ENCODE measurements at regions of chr5 and their contacts with region 1.

Region 1: GRCh38 chr5:140235791-140236551 is 61.0 kb downstream of the CYSTM1 start:
- DNase-seq: no peak
- ATAC-seq: no peak
- H3K4me3 ChIP-seq: no peak overlapping the region
- H3K27ac ChIP-seq: no peak overlapping the region
- H3K4me1 ChIP-seq: peaks cover 6% of the 10 kb centered on the region
- H3K27me3 ChIP-seq: no peaks in the 10 kb centered on the region
- CTCF ChIP-seq: no peak
- POLR2A ChIP-seq: no peak
- RAD21 ChIP-seq: no peak

Region 2: GRCh38 chr5:139415221-139415861 is 820.6 kb before region 1 on chr5:
- CTCF ChIA-PET with region 1: no interaction called
- POLR2A ChIA-PET with region 1: no interaction called
- dilution Hi-C with region 1: no loop called
- in situ Hi-C with region 1: no loop called
- intact Hi-C with region 1: no loop called
- DNase-seq: no peak
- ATAC-seq: no peak
- H3K4me3 ChIP-seq: no peak overlapping the region
- H3K27ac ChIP-seq: no peak overlapping the region
- H3K4me1 ChIP-seq: peaks cover 7% of the 10 kb centered on the region; the same call in 1 of the 2 replicates
- H3K27me3 ChIP-seq: no peaks in the 10 kb centered on the region
- CTCF ChIP-seq: no peak
- POLR2A ChIP-seq: no peak
- RAD21 ChIP-seq: no peak

Region 3: GRCh38 chr5:140202078-140202477 is 33.9 kb before region 1 on chr5:
- CTCF ChIA-PET with region 1: no interaction called
- POLR2A ChIA-PET with region 1: no interaction called
- dilution Hi-C with region 1: no loop called
- in situ Hi-C with region 1: no loop called
- intact Hi-C with region 1: no loop called
- DNase-seq: peak; percentile 61
- ATAC-seq: no peak; the same call in 1 of the 2 replicates
- H3K4me3 ChIP-seq: no peak overlapping the region
- H3K27ac ChIP-seq: no peak overlapping the region
- H3K4me1 ChIP-seq: no peaks in the 10 kb centered on the region
- H3K27me3 ChIP-seq: no peaks in the 10 kb centered on the region
- CTCF ChIP-seq: no peak
- POLR2A ChIP-seq: no peak
- RAD21 ChIP-seq: no peak

Region 4: DNA sequence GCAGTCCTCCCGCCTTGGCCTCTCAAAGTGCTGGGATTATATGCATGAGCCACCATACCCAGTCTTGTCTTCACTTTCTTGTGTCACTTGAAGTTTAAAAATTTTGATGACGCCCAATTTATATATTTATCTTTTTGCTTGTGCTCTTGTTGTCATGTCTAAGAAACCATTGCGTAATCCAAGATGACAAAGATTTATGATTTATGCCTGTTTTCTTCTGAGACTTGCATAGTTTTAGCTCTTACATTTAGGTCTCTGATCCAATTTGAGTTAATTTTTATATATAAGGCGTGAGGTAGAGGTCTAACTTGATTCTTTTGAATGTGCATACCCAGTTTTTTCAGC is 184.2 kb after region 1 on chr5:
- CTCF ChIA-PET with region 1: no interaction called
- POLR2A ChIA-PET with region 1: no interaction called
- dilution Hi-C with region 1: no loop called
- in situ Hi-C with region 1: no loop called
- intact Hi-C with region 1: no loop called
- DNase-seq: no peak
- ATAC-seq: no peak
- H3K4me3 ChIP-seq: no peak overlapping the region
- H3K27ac ChIP-seq: no peak overlapping the region
- H3K4me1 ChIP-seq: no peaks in the 10 kb centered on the region
- H3K27me3 ChIP-seq: no peaks in the 10 kb centered on the region
- CTCF ChIP-seq: no peak
- POLR2A ChIP-seq: no peak
- RAD21 ChIP-seq: no peak

Region 5: DNA sequence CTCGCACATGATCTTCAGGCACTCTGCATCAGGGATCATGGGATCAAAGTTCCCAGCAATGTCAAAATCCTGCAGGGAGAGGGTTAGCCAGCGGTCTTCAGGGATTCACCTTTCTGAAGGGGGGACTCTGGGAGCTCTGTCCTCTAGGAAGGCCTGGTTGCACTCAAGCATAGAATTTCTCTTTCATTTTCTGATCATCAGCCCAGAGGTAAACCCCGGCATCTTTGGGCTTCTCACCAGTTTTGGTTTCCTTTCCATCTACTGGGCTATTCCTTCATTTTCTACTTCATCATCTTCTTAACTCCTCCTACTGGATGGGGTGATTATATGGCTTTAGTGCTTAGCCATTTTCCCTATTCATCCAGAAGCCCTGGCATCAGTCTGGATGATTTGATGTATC is 442.0 kb after region 1 on chr5:
- CTCF ChIA-PET with region 1: interaction called, 3 read pairs
- POLR2A ChIA-PET with region 1: interaction called, 13 read pairs
- dilution Hi-C with region 1: no loop called
- in situ Hi-C with region 1: no loop called
- intact Hi-C with region 1: no loop called
- DNase-seq: no peak
- ATAC-seq: no peak
- H3K4me3 ChIP-seq: no peak overlapping the region
- H3K27ac ChIP-seq: no peak overlapping the region
- H3K4me1 ChIP-seq: no peaks in the 10 kb centered on the region
- H3K27me3 ChIP-seq: no peaks in the 10 kb centered on the region
- CTCF ChIP-seq: no peak
- POLR2A ChIP-seq: no peak
- RAD21 ChIP-seq: no peak